ENCODE measurements at regions of chr7 and their contacts with region 1.

Region 1: GRCh38 chr7:25894902-25895791 is 256.9 kb upstream of the NFE2L3 start:
- DNase-seq: peak; percentile 49 to 84 (median 61)
- ATAC-seq: peak; percentile 54 to 87 (median 80)
- H3K4me3 ChIP-seq: peak overlapping the region in 10 of 12 donors; percentile 4 to 37 (median 18)
- H3K27ac ChIP-seq: no peak overlapping the region
- H3K4me1 ChIP-seq: peaks cover 0 to 18% (median 4%) of the 10 kb centered on the region in 12 donors
- H3K27me3 ChIP-seq: peaks cover 0 to 62% (median 10%) of the 10 kb centered on the region in 9 donors
- CTCF ChIP-seq: peak; percentile 45 to 71 (median 63)
- POLR2A ChIP-seq: no peak

Region 2: GRCh38 chr7:26061688-26062150 is 166.6 kb after region 1 on chr7:
- intact Hi-C with region 1: loop called (anchors 1 to 10 kb)
- DNase-seq: peak in 4 of 5 donors; percentile 30 to 55 (median 34)
- ATAC-seq: peak in 2 of 4 donors; percentile 54 to 55
- H3K4me3 ChIP-seq: no peak overlapping the region
- H3K27ac ChIP-seq: no peak overlapping the region
- H3K4me1 ChIP-seq: no peaks in the 10 kb centered on the region
- H3K27me3 ChIP-seq: peaks cover 0 to 59% (median 8%) of the 10 kb centered on the region in 9 donors
- CTCF ChIP-seq: peak; percentile 56 to 80 (median 72)
- POLR2A ChIP-seq: no peak

Region 3: DNA sequence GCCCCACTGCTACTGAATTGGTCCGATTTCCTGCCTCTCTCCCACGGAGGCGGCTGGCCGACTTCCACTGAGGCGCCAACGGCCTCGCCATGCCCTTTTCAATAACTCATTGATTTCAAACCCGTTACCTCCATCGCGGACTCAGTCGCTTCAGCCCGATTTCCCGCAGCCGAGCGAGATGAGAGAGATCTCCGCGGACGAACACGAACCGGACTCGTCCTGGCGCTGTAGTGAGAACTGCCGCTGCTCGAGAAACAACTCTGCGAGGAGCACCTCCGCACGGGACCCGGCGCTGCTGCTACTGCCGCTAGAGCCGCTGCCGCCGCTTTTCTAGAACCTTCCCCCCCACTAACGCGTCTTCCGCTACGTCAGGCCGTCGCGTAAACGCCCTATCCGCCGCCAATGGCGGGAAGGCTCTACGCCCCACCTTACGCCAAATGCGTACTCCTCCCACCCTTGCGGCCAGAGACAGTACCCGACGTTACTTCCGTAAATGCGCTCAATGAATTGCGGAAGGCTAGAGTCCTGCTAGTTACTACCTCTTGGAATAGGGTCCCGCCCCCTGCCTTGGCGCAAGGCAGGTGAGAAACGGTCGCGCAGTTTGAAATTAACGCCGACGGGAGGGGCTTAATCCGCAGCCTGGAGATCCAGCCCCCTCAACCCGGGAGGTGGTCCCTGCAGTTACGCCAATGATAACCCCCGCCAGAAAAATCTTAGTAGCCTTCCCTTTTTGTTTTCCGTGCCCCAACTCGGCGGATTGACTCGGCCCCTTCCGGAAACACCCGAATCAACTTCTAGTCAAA is 305.5 kb after region 1 on chr7 and contains the start of gene HNRNPA2B1:
- intact Hi-C with region 1: loop called in 4 of 10 experiments (anchors 2 to 10 kb)
- DNase-seq: peak; percentile 95 to 98 (median 96)
- ATAC-seq: peak; percentile 80 to 90 (median 88)
- H3K4me3 ChIP-seq: peak within 1 kb of the TSS; percentile 75 to 97 (median 88)
- H3K27ac ChIP-seq: peak within 1 kb of the TSS; percentile 96 to 100 (median 99)
- H3K4me1 ChIP-seq: peaks cover 10 to 54% (median 47%) of the 10 kb centered on the region in 12 donors
- H3K27me3 ChIP-seq: no peaks in the 10 kb centered on the region
- CTCF ChIP-seq: peak in 1 of 12 donors; percentile 15
- POLR2A ChIP-seq: peak; percentile 97 to 99
- total RNA-seq, gene HNRNPA2B1: 142 to 411 (median 377) TPM

Region 4: DNA sequence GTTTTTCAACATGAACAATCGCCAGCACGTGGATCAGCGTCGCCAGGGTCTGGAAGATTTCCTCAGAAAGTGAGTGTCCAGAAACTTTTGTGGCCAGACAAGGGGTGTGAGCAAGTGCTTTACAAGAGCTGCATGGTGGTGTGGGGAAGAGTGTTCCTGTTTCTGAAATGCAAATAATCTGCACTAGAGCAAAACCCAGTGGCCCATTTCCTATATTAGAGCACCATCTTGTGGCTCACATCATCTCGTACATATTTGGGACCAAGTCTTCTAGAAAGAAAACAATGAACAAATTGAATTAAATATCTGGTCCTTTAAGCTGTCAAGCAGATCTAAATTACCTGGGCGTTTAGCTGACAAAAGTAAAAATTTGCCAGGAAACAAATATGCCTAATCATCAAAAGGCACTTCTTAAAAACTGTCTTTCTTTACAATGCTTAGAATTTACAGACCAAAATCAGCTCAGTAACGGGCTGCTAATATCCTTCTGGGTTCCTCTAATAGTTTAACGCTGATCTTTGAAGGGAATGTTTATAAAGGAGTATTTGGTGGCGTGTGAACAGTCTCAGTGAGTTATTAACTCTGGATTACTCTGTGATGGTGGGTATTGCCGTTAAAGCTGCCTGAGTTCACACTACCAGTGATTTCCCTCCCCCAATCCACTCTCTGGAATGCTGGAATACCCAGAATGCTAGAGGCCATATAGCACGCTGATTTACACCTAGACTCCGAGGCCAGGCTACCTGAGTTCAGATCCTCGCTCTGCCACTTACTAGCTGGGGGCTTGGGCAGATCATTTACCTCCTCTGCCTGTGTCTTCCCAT is 470.1 kb after region 1 on chr7:
- intact Hi-C with region 1: loop called (anchors 1 to 5 kb)
- DNase-seq: peak in 2 of 5 donors; percentile 31 to 40
- ATAC-seq: peak; percentile 47 to 87 (median 84)
- H3K4me3 ChIP-seq: no peak overlapping the region
- H3K27ac ChIP-seq: no peak overlapping the region
- H3K4me1 ChIP-seq: peaks cover 0 to 15% (median 0%) of the 10 kb centered on the region in 12 donors
- H3K27me3 ChIP-seq: peaks cover 0 to 44% (median 12%) of the 10 kb centered on the region in 9 donors
- CTCF ChIP-seq: peak; percentile 36 to 84 (median 74)
- POLR2A ChIP-seq: no peak

Region 5: DNA sequence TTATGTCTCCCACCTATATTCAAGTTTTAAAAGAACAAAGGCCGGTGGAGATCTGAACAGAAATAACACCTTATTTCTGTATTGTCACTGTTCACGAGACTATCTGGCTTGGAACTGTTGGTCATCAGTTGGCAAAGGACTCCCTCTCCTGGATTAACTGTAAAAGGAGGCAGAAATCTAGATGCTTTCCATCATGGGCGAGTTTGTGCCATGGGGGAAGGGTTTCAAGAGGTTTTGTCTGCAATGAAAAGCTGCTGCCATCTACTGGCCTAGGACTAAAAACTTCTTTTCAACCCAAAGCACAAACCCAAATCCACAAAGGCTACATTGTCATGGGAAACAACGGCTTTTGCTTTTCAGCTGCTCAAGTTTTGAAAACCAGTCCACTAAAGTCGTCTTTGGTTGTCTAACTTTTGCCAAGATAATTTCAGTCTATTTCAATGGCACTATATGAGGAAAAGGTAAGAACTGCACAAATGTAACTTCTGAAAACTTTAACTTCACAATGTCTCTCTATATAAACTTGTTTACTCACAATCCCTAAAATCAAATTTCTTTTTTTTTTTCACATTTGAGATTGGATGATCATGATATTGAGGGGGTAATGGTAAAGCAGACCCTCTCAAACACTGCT is 772.5 kb after region 1 on chr7:
- intact Hi-C with region 1: loop called in 8 of 10 experiments (anchors 5 kb)
- DNase-seq: peak in 4 of 5 donors; percentile 30 to 64 (median 51)
- ATAC-seq: peak in 3 of 4 donors; percentile 75 to 83 (median 79)
- H3K4me3 ChIP-seq: no peak overlapping the region
- H3K27ac ChIP-seq: no peak overlapping the region
- H3K4me1 ChIP-seq: peaks cover 0 to 9% (median 0%) of the 10 kb centered on the region in 12 donors
- H3K27me3 ChIP-seq: peaks cover 0 to 45% (median 4%) of the 10 kb centered on the region in 9 donors
- CTCF ChIP-seq: peak; percentile 62 to 83 (median 72)
- POLR2A ChIP-seq: no peak

Region 6: DNA sequence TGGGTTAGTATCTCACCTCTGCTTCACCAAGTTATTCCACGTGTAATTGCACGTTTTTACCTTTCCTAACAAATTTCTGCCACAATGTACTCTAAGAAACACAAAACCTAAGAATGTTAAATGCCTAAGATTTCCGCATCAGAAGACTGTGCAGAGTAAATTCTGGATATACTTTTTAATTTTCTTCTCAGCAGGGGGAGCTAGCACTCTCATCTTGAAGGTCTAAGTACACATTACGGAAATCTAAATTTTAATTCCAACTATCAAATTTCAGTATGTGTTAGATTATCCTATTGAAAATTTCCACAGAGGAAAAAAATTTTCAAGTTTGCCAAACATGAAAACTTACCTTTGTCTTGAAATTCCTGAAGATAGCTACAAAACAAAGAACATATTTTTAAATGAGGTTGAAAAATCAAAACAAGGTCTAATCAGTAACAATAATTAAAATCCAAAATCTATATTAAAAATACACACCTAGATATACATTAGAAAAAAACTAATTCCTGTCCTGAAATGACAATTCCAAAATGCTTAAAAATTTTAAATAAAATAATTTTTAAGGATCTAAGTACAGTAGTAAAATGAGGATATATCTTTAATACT is 958.7 kb after region 1 on chr7:
- intact Hi-C with region 1: loop called in 1 of 10 experiments (anchors 10 kb)
- DNase-seq: no peak
- ATAC-seq: no peak
- H3K4me3 ChIP-seq: no peak overlapping the region
- H3K27ac ChIP-seq: no peak overlapping the region
- H3K4me1 ChIP-seq: peaks cover 0 to 7% (median 0%) of the 10 kb centered on the region in 12 donors
- H3K27me3 ChIP-seq: peaks cover 0 to 71% (median 20%) of the 10 kb centered on the region in 9 donors
- CTCF ChIP-seq: peak in 11 of 12 donors; percentile 15 to 64 (median 51)
- POLR2A ChIP-seq: no peak

Region 7: GRCh38 chr7:27150568-27151340 is 1255.6 kb after region 1 on chr7:
- intact Hi-C with region 1: loop called in 2 of 10 experiments (anchors 10 kb)
- DNase-seq: peak; percentile 52 to 80 (median 64)
- ATAC-seq: peak; percentile 55 to 85 (median 71)
- H3K4me3 ChIP-seq: peak overlapping the region in 11 of 12 donors; percentile 1 to 39 (median 33)
- H3K27ac ChIP-seq: peak overlapping the region in 1 of 12 donors; percentile 92
- H3K4me1 ChIP-seq: peaks cover 3 to 59% (median 24%) of the 10 kb centered on the region in 12 donors
- H3K27me3 ChIP-seq: peaks cover 89 to 100% (median 99%) of the 10 kb centered on the region in 9 donors
- CTCF ChIP-seq: peak; percentile 64 to 90 (median 82)
- POLR2A ChIP-seq: no peak

Measured in heart left ventricle (tissue), 16 donors.